ENCODE measurements at regions of chr17 and their contacts with region 1.

Region 1: DNA sequence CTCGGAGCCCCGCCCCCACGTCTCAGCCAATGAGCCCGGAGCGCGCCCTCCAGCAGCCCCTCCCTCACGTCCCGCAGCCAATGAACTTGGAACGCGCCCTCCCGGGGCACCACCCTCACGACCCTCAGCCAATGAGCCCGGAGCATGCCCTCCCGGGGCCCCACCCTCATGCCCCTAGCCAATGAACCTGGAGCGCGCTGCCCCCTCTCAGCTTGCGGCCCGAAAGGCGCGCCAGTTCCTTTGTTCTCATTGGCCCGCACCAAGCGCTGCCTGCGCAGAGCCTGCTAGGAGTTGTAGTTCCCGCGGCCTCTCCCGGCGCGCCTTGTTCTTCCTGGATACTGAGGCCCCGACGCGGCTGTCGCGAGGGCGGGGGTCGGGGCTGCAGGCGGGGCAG is at the start of gene LRRC45:
- DNase-seq: peak; percentile 100
- ATAC-seq: peak; percentile 94
- H3K4me3 Mint-ChIP-seq: peak within 1 kb of the TSS; percentile 86
- H3K27ac Mint-ChIP-seq: peak within 1 kb of the TSS; percentile 72
- H3K4me1 Mint-ChIP-seq: peaks cover 19% of the 10 kb centered on the region
- H3K27me3 Mint-ChIP-seq: no peaks in the 10 kb centered on the region
- total RNA-seq, gene LRRC45: 41.6 to 45.1 TPM

Region 2: GRCh38 chr17:81959362-81960129 is 63.4 kb before region 1 on chr17:
- POLR2A ChIA-PET with region 1: interaction called, 39 read pairs
- DNase-seq: peak; percentile 93
- ATAC-seq: peak; percentile 95
- H3K4me3 Mint-ChIP-seq: no peak overlapping the region
- H3K27ac Mint-ChIP-seq: no peak overlapping the region
- H3K4me1 Mint-ChIP-seq: no peaks in the 10 kb centered on the region
- H3K27me3 Mint-ChIP-seq: peaks cover 40% of the 10 kb centered on the region

Region 3: DNA sequence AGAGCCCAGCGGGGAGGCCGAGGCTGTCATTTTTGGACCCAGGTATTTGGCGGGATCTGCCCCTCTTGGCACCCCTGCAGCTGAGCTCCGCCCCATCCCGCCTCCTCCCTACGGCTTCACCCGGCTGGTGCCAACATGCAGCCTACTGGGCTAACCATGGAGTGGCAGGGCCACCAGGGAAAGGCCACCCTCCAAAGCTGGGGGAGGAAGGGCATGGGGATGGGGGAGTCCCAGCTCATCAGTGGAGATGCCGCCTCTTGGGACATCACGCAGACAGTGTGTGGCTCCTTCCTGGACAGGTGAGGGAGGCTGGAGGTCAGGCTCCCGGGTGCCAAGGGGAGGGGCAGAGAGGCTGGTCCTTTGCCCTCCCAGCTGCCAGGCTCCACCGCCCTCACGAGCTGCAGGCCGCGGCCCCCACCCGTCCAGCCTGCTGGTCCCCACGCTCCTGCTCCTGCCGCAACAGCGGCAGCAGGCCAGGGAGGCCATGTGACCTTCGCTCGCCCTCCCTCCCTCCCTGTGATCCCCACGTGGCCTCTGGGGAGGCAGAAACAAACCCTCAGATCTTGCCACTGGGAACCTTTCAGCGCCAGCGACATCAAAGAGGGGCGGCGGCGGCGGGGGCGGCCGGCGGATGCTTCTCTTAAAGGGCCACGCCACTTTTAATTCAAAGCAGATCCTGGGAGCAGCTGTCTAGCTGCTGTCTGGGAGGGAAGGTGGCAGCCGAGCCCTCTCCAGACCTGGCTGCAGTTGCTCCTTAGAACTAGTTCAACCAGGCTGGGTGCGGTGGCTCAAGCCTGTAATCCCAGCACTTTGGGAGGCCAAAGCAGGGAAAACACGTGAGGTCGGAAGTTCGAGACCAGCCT is 55.2 kb before region 1 on chr17:
- POLR2A ChIA-PET with region 1: interaction called, 25 read pairs
- DNase-seq: peak; percentile 88
- ATAC-seq: peak; percentile 95
- H3K4me3 Mint-ChIP-seq: peak overlapping the region; percentile 70
- H3K27ac Mint-ChIP-seq: peak overlapping the region; percentile 83
- H3K4me1 Mint-ChIP-seq: peaks cover 10% of the 10 kb centered on the region
- H3K27me3 Mint-ChIP-seq: peaks cover 24% of the 10 kb centered on the region

Region 4: DNA sequence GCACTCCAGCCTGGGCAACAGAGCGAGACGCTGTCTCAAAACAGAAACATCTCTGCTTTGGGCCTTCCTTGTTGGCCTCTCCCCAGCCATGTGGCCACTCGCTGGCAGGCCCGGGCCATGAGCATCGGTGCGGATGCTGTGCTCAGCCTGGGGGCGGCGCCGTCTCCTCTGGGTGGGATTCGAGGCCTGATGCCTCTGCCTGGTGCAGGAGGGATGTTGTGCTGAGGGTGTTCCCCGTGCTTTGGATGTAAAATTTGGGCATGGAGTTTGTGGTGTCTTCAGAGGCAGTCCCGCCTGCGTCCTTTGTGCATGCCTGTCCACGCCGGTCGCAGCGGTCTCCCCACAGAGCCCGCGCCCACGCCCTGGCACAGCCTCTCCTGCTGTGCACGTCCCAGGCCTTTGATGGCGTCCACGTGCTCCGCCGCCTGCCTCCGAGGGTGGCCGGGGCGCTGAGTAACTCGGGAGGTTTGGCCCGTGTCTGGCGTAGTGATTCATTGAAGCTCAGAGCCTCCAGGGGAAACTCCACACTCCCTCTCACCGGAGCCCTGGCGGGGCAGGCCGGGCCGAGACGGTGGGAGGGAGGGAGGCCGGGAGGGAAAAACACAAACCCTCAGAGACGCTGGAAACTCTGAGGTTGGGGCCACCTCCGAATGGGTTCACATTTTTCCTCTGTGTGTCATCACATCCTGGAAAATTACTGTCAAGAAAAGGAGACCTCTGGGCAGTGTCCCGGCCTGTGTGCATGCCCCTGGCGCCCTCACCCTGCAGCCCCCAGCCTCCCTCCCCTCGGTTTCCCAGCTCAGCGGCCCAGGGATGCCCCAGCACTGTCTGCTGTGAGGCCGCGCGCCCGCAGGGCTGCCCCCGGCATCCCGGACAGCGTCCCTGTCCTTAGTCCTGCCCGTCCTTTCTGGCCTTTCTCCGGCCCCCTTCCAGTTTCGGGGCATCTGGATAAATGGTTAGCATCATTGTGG is 19.3 kb before region 1 on chr17:
- POLR2A ChIA-PET with region 1: no interaction called
- DNase-seq: no peak
- ATAC-seq: no peak
- H3K4me3 Mint-ChIP-seq: no peak overlapping the region
- H3K27ac Mint-ChIP-seq: no peak overlapping the region
- H3K4me1 Mint-ChIP-seq: peaks cover 3% of the 10 kb centered on the region
- H3K27me3 Mint-ChIP-seq: no peaks in the 10 kb centered on the region

Region 5: GRCh38 chr17:82037113-82037888 is 14.3 kb after region 1 on chr17 and contains the start of gene DCXR:
- POLR2A ChIA-PET with region 1: interaction called, 13 read pairs
- DNase-seq: peak; percentile 99
- ATAC-seq: peak; percentile 95
- H3K4me3 Mint-ChIP-seq: peak within 1 kb of the TSS; percentile 91
- H3K27ac Mint-ChIP-seq: peak within 1 kb of the TSS; percentile 95
- H3K4me1 Mint-ChIP-seq: peaks cover 20% of the 10 kb centered on the region
- H3K27me3 Mint-ChIP-seq: no peaks in the 10 kb centered on the region
- total RNA-seq, gene DCXR: 110 to 115 TPM

Measured in activated naive CD8-positive, alpha-beta T cell treated with anti-CD3 and anti-CD28 coated beads, Interleukin-2, amount 10 ng/mL, durations not matched to agents 7 days and 5 days (primary cell).